HepG2 (cell line): ENCODE measurements at regions of chr5 and their contacts with region 1.

Region 1: GRCh38 chr5:118987988-118988865 is at the start of gene DTWD2:
- DNase-seq: peak; percentile 92
- ATAC-seq: peak; percentile 99
- H3K4me3 ChIP-seq: peak within 1 kb of the TSS; percentile 78 to 89 (median 80)
- H3K27ac ChIP-seq: peak within 1 kb of the TSS; percentile 90
- H3K4me1 ChIP-seq: peaks cover 9% of the 10 kb centered on the region
- H3K27me3 ChIP-seq: no peaks in the 10 kb centered on the region; a peak in 1 of 5 replicates
- CTCF ChIP-seq: peak; percentile 93
- EP300 ChIP-seq: 0 out of 4 replicates have a peak, but pooled peaks have one; percentile 3 to 19
- POLR2A ChIP-seq: peak; percentile 60 to 64; a peak in 3 of 4 replicates
- RAD21 ChIP-seq: peak; percentile 96
- total RNA-seq, gene DTWD2: 6.0 and 7.9 TPM in 2 replicates

Region 2: GRCh38 chr5:119070828-119071572 is 82.8 kb after region 1 on chr5 and contains the start of gene DMXL1:
- CTCF ChIA-PET with region 1: no interaction called
- POLR2A ChIA-PET with region 1: interaction called, 11 read pairs
- in situ Hi-C with region 1: no loop called
- intact Hi-C with region 1: loop called (anchors 2 kb)
- DNase-seq: peak; percentile 98
- ATAC-seq: peak; percentile 91
- H3K4me3 ChIP-seq: peak within 1 kb of the TSS; percentile 91 to 93 (median 92)
- H3K27ac ChIP-seq: peak within 1 kb of the TSS; percentile 93
- H3K4me1 ChIP-seq: peaks cover 37% of the 10 kb centered on the region
- H3K27me3 ChIP-seq: no peaks in the 10 kb centered on the region; a peak in 1 of 5 replicates
- CTCF ChIP-seq: no peak; the same call in 1 of the 2 replicates
- EP300 ChIP-seq: no peak
- POLR2A ChIP-seq: peak; percentile 82
- RAD21 ChIP-seq: peak; percentile 53; the same call in 1 of the 2 replicates
- total RNA-seq, gene DMXL1: 18.6 and 22.9 TPM in 2 replicates

Region 3: GRCh38 chr5:119153629-119154028 is 165.4 kb after region 1 on chr5:
- CTCF ChIA-PET with region 1: no interaction called
- POLR2A ChIA-PET with region 1: no interaction called
- in situ Hi-C with region 1: no loop called
- intact Hi-C with region 1: no loop called
- DNase-seq: no peak
- ATAC-seq: no peak
- H3K4me3 ChIP-seq: no peak overlapping the region
- H3K27ac ChIP-seq: no peak overlapping the region
- H3K4me1 ChIP-seq: no peaks in the 10 kb centered on the region
- H3K27me3 ChIP-seq: no peaks in the 10 kb centered on the region
- CTCF ChIP-seq: no peak
- EP300 ChIP-seq: no peak
- POLR2A ChIP-seq: no peak
- RAD21 ChIP-seq: no peak

Region 4: DNA sequence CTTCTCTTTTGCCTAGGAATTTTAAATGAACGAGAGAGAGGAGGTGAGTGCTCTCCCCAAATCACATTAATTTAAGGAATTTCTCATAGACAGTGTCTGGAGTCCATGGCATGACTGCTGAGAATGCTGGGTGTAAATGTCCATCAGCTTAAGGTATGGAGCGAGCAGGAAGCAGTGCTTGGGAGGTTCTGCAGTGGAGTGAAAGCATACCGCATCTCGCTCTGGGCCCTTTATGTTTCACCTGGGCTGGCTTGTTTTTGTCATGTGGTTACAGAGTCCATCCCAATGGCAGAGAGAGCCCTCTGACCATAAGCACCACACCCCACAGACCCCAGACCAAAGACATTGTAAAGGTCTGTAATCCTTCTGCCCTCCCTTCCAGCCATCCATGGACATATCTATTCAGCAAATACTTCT is 347.0 kb after region 1 on chr5:
- CTCF ChIA-PET with region 1: interaction called, 3 read pairs
- POLR2A ChIA-PET with region 1: no interaction called
- in situ Hi-C with region 1: no loop called
- intact Hi-C with region 1: loop called (anchors 2 kb)
- DNase-seq: no peak
- ATAC-seq: no peak; the same call in 1 of the 3 replicates
- H3K4me3 ChIP-seq: no peak overlapping the region
- H3K27ac ChIP-seq: no peak overlapping the region
- H3K4me1 ChIP-seq: peaks cover 13% of the 10 kb centered on the region
- H3K27me3 ChIP-seq: no peaks in the 10 kb centered on the region
- CTCF ChIP-seq: no peak
- EP300 ChIP-seq: no peak
- POLR2A ChIP-seq: no peak
- RAD21 ChIP-seq: no peak

Region 5: DNA sequence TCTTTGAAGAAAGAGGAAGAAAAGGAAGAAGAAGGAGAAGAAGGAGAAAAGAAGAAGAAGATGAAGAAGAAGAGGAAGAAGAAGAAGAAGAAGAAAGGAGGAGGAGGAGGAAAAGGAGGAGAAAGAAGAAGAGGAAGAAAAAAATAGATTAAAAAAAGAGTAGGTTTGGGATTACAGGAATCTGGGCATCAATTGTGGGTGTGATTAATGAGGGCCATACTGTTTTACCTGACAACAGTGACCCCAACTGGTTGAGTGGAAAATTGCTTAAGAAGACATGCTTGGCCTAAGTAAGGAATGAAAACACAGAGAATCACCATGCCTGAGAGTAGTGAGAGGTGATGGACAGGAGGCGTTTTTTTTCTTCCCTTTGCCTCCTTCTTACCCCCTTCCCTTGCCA is 755.7 kb after region 1 on chr5:
- CTCF ChIA-PET with region 1: no interaction called
- POLR2A ChIA-PET with region 1: no interaction called
- in situ Hi-C with region 1: no loop called
- intact Hi-C with region 1: loop called (anchors 10 kb)
- DNase-seq: peak; percentile 33
- ATAC-seq: peak; percentile 82
- H3K4me3 ChIP-seq: no peak overlapping the region
- H3K27ac ChIP-seq: no peak overlapping the region
- H3K4me1 ChIP-seq: no peaks in the 10 kb centered on the region
- H3K27me3 ChIP-seq: no peaks in the 10 kb centered on the region; a peak in 1 of 5 replicates
- CTCF ChIP-seq: peak; percentile 66
- EP300 ChIP-seq: no peak
- POLR2A ChIP-seq: no peak
- RAD21 ChIP-seq: no peak